ENCODE measurements at regions of chr1 and their contacts with region 1.

Region 1: DNA sequence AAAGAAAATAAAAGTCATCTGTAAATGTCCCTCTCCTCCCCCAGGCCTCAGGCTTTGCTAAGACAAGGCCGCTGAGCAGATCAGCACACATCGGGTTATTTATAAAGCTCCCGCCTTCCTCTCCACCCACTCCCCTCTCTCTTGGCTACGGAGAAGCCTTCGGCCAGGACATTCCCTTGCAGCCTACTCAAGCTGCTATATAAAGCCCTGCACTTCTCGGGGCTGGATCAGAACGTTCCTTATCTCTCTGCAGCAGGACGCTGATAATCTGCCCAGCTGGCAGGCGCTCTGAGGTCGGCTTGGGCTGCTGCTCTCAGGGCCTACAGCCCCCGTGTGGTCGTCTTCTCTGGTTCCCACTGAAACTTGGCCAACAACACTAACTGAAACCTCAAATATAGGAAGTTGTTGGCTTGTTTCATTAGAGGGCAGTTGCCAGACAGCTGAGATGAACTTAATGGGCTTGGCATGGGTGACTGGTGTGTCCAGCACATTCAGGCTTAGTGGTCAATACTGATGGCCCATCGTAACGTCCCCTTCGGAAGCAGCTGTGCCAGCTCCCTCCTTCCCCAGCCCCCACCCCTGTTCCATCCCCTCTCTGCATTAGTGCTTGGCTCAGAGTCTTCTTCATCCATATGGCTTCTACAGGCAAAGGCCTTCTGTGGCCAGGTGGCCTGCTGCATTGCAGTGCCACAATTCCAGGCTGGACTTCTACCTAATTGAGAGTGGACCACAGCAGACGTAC is 64.6 kb downstream of the IER5 start:
- DNase-seq: no peak
- ATAC-seq: peak; percentile 88
- H3K4me3 ChIP-seq: no peak overlapping the region
- H3K27ac ChIP-seq: peak overlapping the region; percentile 62
- H3K4me1 ChIP-seq: peaks cover 48% of the 10 kb centered on the region
- H3K27me3 ChIP-seq: no peaks in the 10 kb centered on the region
- CTCF ChIP-seq: peak; percentile 19 to 40 (median 40); a peak in 4 of 6 replicates
- EP300 ChIP-seq: peak; percentile 57 to 68; a peak in 2 of 4 replicates
- POLR2A ChIP-seq: peak; percentile 61
- RAD21 ChIP-seq: peak; percentile 41; the same call in 1 of the 2 replicates

Region 2: DNA sequence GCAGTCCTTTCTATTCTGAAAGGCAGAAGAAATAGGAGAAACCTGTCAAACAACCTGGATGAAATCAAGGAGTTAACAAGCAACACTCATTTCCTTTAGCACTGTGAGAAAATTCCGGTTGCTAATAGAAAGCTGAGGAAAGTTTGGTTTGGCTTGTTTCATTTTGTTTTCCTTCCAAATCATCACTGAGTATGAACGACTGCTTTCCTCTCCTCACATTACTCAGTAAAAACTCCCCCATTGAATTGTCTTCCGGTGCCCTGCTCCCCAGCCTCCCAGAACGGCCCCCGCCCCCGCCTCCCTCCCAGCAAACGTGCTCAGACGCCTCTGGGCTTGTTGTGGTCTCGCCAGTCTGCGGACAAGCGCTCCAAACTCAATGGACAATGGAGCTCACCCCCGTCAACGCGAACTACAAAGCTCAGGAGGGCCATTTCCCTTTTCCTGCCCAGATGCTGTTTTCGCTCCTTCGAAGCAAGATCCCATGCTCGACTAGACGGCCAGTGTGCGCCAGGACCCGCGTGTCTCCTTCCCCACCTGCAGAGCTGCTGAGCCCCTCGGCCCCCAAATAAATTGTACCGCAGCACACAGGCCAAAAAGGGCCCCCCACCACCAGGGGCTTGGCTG is 131.1 kb before region 1 on chr1:
- CTCF ChIA-PET with region 1: no interaction called
- POLR2A ChIA-PET with region 1: interaction called, 3 read pairs
- RAD21 ChIA-PET with region 1: interaction called, 4 read pairs
- SMC1A ChIA-PET with region 1: interaction called, 31 read pairs
- in situ Hi-C with region 1: no loop called
- intact Hi-C with region 1: no loop called
- DNase-seq: no peak
- ATAC-seq: peak; percentile 76
- H3K4me3 ChIP-seq: peak overlapping the region; percentile 90
- H3K27ac ChIP-seq: peak overlapping the region; percentile 89
- H3K4me1 ChIP-seq: peaks cover 12% of the 10 kb centered on the region
- H3K27me3 ChIP-seq: no peaks in the 10 kb centered on the region
- CTCF ChIP-seq: no peak
- EP300 ChIP-seq: no peak
- POLR2A ChIP-seq: no peak
- RAD21 ChIP-seq: no peak

Region 3: GRCh38 chr1:181079382-181079781 is 73.7 kb before region 1 on chr1:
- CTCF ChIA-PET with region 1: interaction called, 1,067 read pairs
- POLR2A ChIA-PET with region 1: interaction called, 3 read pairs
- RAD21 ChIA-PET with region 1: interaction called, 12 read pairs
- SMC1A ChIA-PET with region 1: interaction called, 1,399 read pairs
- in situ Hi-C with region 1: no loop called
- intact Hi-C with region 1: no loop called
- DNase-seq: no peak
- ATAC-seq: no peak
- H3K4me3 ChIP-seq: no peak overlapping the region
- H3K27ac ChIP-seq: no peak overlapping the region
- H3K4me1 ChIP-seq: peaks cover 38% of the 10 kb centered on the region
- H3K27me3 ChIP-seq: no peaks in the 10 kb centered on the region
- CTCF ChIP-seq: no peak
- EP300 ChIP-seq: no peak
- POLR2A ChIP-seq: no peak
- RAD21 ChIP-seq: no peak

Region 4: GRCh38 chr1:181204530-181204929 is 51.5 kb after region 1 on chr1:
- CTCF ChIA-PET with region 1: no interaction called
- POLR2A ChIA-PET with region 1: no interaction called
- RAD21 ChIA-PET with region 1: no interaction called
- SMC1A ChIA-PET with region 1: no interaction called
- in situ Hi-C with region 1: no loop called
- intact Hi-C with region 1: no loop called
- DNase-seq: no peak
- ATAC-seq: no peak
- H3K4me3 ChIP-seq: no peak overlapping the region
- H3K27ac ChIP-seq: no peak overlapping the region
- H3K4me1 ChIP-seq: no peaks in the 10 kb centered on the region
- H3K27me3 ChIP-seq: peaks cover 0 to 2% of the 10 kb centered on the region in 2 experiments; a peak in 1 of 4 replicates
- CTCF ChIP-seq: no peak
- EP300 ChIP-seq: no peak
- POLR2A ChIP-seq: no peak
- RAD21 ChIP-seq: no peak